Activated naive CD4-positive, alpha-beta T cell treated with anti-CD3 and anti-CD28 coated beads for 36 hours (primary cell): ENCODE measurements at regions of chr7 and their contacts with region 1.

Region 1: GRCh38 chr7:65840446-65840845 is 32.4 kb upstream of the VKORC1L1 start:
- DNase-seq: peak; percentile 48
- H3K4me3 Mint-ChIP-seq: no peak overlapping the region
- H3K27ac Mint-ChIP-seq: no peak overlapping the region
- H3K4me1 Mint-ChIP-seq: peaks cover under 1% of the 10 kb centered on the region
- H3K27me3 Mint-ChIP-seq: no peaks in the 10 kb centered on the region

Region 2: GRCh38 chr7:65722345-65722792 is 118.1 kb before region 1 on chr7:
- CTCF ChIA-PET with region 1: interaction called, 4 read pairs
- intact Hi-C with region 1: loop called (anchors 5 kb)
- DNase-seq: peak; percentile 78
- H3K4me3 Mint-ChIP-seq: no peak overlapping the region
- H3K27ac Mint-ChIP-seq: no peak overlapping the region
- H3K4me1 Mint-ChIP-seq: no peaks in the 10 kb centered on the region
- H3K27me3 Mint-ChIP-seq: no peaks in the 10 kb centered on the region

Region 3: GRCh38 chr7:65731562-65732035 is 108.8 kb before region 1 on chr7:
- CTCF ChIA-PET with region 1: no interaction called
- intact Hi-C with region 1: loop called (anchors 5 kb)
- DNase-seq: peak; percentile 25
- H3K4me3 Mint-ChIP-seq: no peak overlapping the region
- H3K27ac Mint-ChIP-seq: no peak overlapping the region
- H3K4me1 Mint-ChIP-seq: peaks cover 6% of the 10 kb centered on the region
- H3K27me3 Mint-ChIP-seq: no peaks in the 10 kb centered on the region

Region 4: GRCh38 chr7:66050990-66051424 is 210.6 kb after region 1 on chr7:
- CTCF ChIA-PET with region 1: no interaction called
- intact Hi-C with region 1: no loop called
- DNase-seq: no peak
- H3K4me3 Mint-ChIP-seq: no peak overlapping the region
- H3K27ac Mint-ChIP-seq: no peak overlapping the region
- H3K4me1 Mint-ChIP-seq: no peaks in the 10 kb centered on the region
- H3K27me3 Mint-ChIP-seq: no peaks in the 10 kb centered on the region